ENCODE measurements at regions of chr2 and their contacts with region 1.

Region 1: GRCh38 chr2:176814306-176815052 is 398.1 kb upstream of the HNRNPA3 start:
- DNase-seq: no peak
- ATAC-seq: peak in 1 of 2 donors; percentile 38

Region 2: GRCh38 chr2:176643646-176644045 is 170.8 kb before region 1 on chr2:
- intact Hi-C with region 1: loop called in 1 of 2 experiments (anchors 10 kb)
- DNase-seq: no peak
- ATAC-seq: no peak

Region 3: DNA sequence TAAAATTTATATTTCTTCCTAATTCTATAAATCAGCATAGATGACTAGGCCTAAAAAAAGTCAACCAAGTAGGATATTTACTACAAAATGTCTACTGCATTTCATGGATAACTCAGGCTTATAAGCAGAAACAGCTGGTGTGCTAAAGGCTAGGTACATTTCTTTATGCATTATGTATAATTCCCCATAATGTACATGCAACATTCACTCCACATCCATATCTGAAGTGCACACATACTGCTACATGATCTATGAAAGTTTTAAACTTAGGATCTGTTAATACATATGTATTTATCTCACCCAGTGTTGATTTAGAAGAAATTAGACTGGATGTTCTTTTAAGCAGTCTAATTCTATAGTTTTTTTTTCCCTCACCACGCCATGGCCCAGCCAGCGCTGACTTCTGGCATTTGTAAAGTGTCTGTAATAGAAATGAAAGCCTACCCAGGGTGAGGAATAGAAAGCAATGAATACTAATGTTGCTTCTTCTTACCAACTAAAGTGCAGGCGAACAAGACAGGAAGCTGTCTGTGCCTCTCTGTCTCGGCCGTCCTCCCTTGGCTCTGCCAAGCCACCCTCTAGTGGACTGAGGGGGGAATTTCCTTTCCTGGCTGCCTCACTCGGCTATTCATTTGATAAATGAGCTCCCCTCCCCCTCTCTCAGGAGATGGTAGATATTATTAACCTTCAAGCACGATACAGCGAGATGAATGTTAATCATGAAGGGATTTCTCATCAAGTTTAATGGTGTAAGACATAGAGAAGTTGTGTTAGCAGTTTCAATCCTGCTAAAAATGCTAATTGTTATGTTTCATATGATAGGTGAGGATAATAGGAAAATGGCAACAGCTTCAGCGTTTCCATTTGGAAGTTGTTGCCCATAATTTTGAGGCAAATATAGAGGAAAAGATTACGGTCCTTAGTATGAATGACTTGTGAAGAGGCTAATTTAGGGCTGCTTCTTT is 160.7 kb before region 1 on chr2:
- intact Hi-C with region 1: loop called (anchors 5 to 10 kb)
- DNase-seq: peak; percentile 52
- ATAC-seq: peak; percentile 88 to 91

Region 4: DNA sequence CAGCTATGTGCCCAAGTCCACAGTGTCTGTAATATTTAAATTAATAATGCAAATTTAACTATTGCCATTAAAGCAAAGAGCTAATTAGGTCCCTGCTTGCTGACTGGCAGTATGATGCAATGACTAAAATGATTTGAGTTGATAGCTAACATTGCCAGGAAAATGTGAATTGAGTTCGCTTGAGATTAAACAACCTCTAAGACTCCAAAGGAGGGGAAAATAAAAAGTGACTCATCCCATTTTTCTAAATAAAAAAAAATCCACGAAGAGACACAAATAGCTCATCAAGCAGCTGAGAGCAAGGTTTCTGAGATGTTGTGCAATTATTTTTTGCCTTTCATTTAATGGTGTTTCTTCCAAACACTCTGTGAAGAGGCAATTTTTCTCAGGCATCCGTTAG is 132.2 kb before region 1 on chr2:
- intact Hi-C with region 1: loop called in 1 of 2 experiments (anchors 10 kb)
- DNase-seq: no peak
- ATAC-seq: peak in 1 of 2 donors; percentile 75

Region 5: DNA sequence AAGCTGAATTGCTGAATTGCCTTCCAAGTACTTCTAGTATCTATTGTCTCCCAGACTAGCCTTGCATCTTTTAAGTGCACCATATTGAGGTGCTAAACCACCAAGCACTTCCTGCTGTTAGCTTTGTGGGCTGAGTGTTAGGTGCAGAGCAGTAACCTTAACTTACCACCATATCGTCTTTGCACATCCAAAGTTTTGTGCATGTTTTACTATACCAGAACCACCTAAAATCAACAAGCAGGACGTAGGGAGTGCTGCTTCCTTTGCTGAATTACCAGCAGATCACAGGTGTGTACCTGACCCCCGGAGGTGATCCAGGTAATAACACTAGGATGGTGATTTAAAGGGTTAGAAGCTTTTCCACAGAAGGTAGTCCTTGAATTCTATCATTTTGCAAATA is 38.2 kb after region 1 on chr2:
- intact Hi-C with region 1: no loop called
- DNase-seq: no peak
- ATAC-seq: peak in 1 of 2 donors; percentile 73

Region 6: DNA sequence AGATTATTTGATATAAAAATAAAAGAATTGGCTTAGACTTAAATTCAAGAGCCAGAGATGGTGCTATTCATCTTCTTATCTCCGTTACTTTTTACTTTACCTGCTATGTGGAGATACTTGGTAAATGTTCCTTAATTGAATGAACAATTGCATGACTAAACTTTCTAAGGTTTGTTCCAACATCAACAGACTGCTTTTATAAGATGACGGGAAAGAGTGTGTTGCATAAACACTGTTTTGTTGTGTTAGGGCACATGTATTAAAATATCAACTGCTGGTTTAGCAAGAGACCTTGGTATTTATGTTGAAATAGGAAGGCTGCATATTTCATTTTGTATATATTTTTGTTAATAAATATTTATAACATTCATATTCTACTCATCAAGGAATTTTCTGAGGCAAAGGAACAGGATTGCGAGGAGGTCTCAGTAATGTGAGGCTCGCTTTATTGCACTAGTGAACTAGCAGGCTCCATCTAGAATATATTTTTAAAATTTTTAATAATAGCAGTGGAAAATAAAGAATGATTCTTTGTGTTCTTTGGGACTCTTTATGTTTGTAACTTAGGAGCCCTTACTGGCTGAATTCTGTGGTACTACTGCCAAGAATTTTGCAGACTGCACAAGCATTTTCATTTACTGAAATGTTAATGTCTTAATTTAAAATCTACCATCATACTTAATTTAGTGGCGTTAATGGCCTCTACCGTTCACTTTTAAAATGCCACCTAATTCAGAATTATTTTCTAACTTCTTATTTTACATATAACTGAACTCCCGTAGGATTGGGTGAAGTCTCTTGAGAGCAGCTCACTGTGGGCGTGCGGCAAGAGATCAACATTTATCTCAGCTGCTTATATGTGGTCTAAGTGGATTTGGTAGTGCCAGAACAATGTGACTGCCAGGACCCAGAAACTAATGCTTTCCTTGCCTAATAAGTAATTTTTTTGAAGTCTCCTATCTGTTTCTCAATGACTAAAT is 460.9 kb after region 1 on chr2:
- intact Hi-C with region 1: no loop called
- DNase-seq: no peak
- ATAC-seq: peak; percentile 62 to 88

Region 7: DNA sequence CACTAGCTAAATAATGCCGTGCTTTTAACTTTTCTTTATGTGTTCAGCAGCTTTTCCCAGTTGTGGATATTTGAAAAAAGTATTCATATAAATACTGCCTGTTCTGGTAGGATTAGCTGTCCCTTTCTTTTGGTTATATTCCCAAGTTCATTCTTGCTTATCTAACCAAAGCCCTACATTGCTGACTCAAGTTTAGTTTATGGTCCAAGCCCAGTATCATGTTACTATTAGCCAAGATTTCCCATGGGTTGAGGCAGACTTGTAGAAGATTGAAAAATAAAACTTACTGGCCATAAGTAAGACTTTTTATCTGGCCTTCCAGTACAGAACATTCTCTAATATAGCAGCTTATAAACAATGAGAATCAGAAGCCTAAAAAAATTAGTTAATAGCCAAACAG is 499.7 kb after region 1 on chr2:
- intact Hi-C with region 1: no loop called
- DNase-seq: no peak
- ATAC-seq: peak; percentile 73 to 86

Measured in left cardiac atrium (tissue), 4 donors.